ENCODE measurements at regions of chr2 and their contacts with region 1.

Region 1: DNA sequence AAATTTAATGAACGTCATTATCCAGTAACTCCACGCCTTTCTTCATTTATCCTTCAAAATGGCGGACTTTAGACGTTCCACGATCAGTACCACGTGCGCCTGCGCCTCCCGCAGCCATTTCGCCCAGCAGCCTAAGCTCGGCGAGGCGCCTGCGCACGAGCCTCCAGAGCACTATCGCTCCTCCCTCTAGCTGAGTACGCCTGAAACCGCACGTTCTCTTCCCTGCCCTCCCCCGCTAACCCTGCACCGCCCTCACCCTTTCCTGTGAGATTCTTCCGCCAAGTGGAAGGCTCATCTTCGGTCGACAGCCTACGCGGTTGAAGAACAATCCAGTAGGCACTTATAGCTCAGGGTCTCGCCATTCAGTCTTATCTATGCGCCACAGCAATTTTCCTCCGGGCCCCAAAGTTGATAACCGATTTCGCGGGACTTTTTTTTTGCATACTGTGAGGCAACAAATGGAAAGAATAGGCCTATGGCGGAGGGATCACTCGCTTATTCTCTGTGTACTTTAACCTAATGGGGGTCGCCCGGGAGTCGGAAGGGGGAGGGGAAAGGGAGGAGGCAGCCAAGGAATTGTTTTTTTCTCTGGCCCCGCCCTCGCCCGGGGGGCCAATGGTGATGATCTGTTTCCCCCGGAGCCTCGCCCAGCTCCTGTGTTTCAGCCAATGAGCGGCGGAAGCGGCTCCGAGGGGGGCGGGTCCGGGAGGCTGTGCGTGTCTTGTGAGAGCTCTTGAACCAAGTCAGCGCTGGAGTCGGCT is at the start of gene KDM3A:
- DNase-seq: peak; percentile 98 to 100 (median 99)
- ATAC-seq: peak; percentile 76
- H3K4me3 ChIP-seq: peak within 1 kb of the TSS; percentile 87
- H3K4me3 Mint-ChIP-seq: peak within 1 kb of the TSS; percentile 99
- H3K27ac ChIP-seq: peak within 1 kb of the TSS; percentile 76 to 94
- H3K27ac Mint-ChIP-seq: peak within 1 kb of the TSS; percentile 97
- H3K4me1 ChIP-seq: peaks cover 33% of the 10 kb centered on the region
- H3K4me1 Mint-ChIP-seq: peaks cover 49% of the 10 kb centered on the region
- H3K27me3 ChIP-seq: no peaks in the 10 kb centered on the region
- H3K27me3 Mint-ChIP-seq: peaks cover 7% of the 10 kb centered on the region
- CTCF ChIP-seq: no peak
- total RNA-seq, gene KDM3A: 205 to 207 TPM

Region 2: GRCh38 chr2:85772019-85772745 is 668.6 kb before region 1 on chr2:
- CTCF ChIA-PET with region 1: no interaction called
- POLR2A ChIA-PET with region 1: no interaction called
- intact Hi-C with region 1: no loop called
- DNase-seq: peak in 1 of 14 experiments; percentile 14
- ATAC-seq: no peak
- H3K4me3 ChIP-seq: no peak overlapping the region
- H3K4me3 Mint-ChIP-seq: no peak overlapping the region
- H3K27ac ChIP-seq: no peak overlapping the region
- H3K27ac Mint-ChIP-seq: no peak overlapping the region
- H3K4me1 ChIP-seq: peaks cover 3% of the 10 kb centered on the region
- H3K4me1 Mint-ChIP-seq: no peaks in the 10 kb centered on the region
- H3K27me3 ChIP-seq: peaks cover 12 to 19% of the 10 kb centered on the region in 2 experiments
- H3K27me3 Mint-ChIP-seq: peaks cover 42% of the 10 kb centered on the region
- CTCF ChIP-seq: no peak

Region 3: GRCh38 chr2:86105252-86105968 is 335.4 kb before region 1 on chr2 and contains the start of gene POLR1A:
- CTCF ChIA-PET with region 1: no interaction called
- POLR2A ChIA-PET with region 1: interaction called, 43 read pairs
- intact Hi-C with region 1: loop called in 1 of 2 experiments (anchors 10 kb)
- DNase-seq: peak; percentile 67 to 93 (median 75)
- ATAC-seq: peak; percentile 75
- H3K4me3 ChIP-seq: peak within 1 kb of the TSS; percentile 80
- H3K4me3 Mint-ChIP-seq: peak within 1 kb of the TSS; percentile 89
- H3K27ac ChIP-seq: peak within 1 kb of the TSS; percentile 81 to 87
- H3K27ac Mint-ChIP-seq: peak within 1 kb of the TSS; percentile 95
- H3K4me1 ChIP-seq: peaks cover 16% of the 10 kb centered on the region
- H3K4me1 Mint-ChIP-seq: peaks cover 60% of the 10 kb centered on the region
- H3K27me3 ChIP-seq: no peaks in the 10 kb centered on the region
- H3K27me3 Mint-ChIP-seq: no peaks in the 10 kb centered on the region
- CTCF ChIP-seq: no peak
- total RNA-seq, gene POLR1A: 13.1 to 13.4 TPM

Region 4: GRCh38 chr2:86201671-86202335 is 239.0 kb before region 1 on chr2:
- CTCF ChIA-PET with region 1: no interaction called
- POLR2A ChIA-PET with region 1: interaction called, 80 read pairs
- intact Hi-C with region 1: loop called (anchors 2 to 5 kb)
- DNase-seq: no peak
- ATAC-seq: no peak
- H3K4me3 ChIP-seq: no peak overlapping the region
- H3K4me3 Mint-ChIP-seq: peak overlapping the region; percentile 72
- H3K27ac ChIP-seq: no peak overlapping the region
- H3K27ac Mint-ChIP-seq: peak overlapping the region; percentile 4
- H3K4me1 ChIP-seq: peaks cover 12% of the 10 kb centered on the region
- H3K4me1 Mint-ChIP-seq: peaks cover 46% of the 10 kb centered on the region
- H3K27me3 ChIP-seq: no peaks in the 10 kb centered on the region
- H3K27me3 Mint-ChIP-seq: no peaks in the 10 kb centered on the region
- CTCF ChIP-seq: no peak

Region 5: GRCh38 chr2:86337244-86337836 is 103.5 kb before region 1 on chr2 and contains the start of gene REEP1:
- CTCF ChIA-PET with region 1: no interaction called
- POLR2A ChIA-PET with region 1: interaction called, 10 read pairs
- intact Hi-C with region 1: no loop called
- DNase-seq: peak in 2 of 14 experiments; percentile 5 to 26
- ATAC-seq: peak; percentile 64
- H3K4me3 ChIP-seq: peak within 1 kb of the TSS; percentile 24
- H3K4me3 Mint-ChIP-seq: peak within 1 kb of the TSS; percentile 80
- H3K27ac ChIP-seq: no peak within 1 kb of the TSS
- H3K27ac Mint-ChIP-seq: no peak within 1 kb of the TSS
- H3K4me1 ChIP-seq: peaks cover 13% of the 10 kb centered on the region
- H3K4me1 Mint-ChIP-seq: peaks cover 27% of the 10 kb centered on the region
- H3K27me3 ChIP-seq: peaks cover 37 to 59% of the 10 kb centered on the region in 2 experiments
- H3K27me3 Mint-ChIP-seq: peaks cover 75% of the 10 kb centered on the region
- CTCF ChIP-seq: no peak
- total RNA-seq, gene REEP1: not detected

Region 6: DNA sequence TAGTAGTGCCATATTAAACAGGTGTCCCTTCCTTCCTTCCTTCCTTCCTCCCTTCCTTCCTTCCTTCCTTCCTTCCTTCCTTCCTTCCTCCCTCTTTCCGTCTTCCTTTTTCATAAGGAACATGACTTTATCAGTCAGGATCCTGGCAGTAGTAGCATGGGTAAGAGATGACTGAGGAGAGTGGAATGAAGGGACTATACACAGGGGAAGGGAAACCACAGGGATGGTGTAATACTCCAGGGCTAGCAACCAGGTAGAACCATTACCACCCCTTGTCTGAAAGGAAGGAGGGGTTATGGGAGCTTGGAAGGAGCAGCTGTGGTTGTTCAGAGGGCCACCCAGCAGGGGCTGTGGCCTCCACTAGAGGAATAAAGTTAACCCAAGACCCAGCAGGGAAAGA is 22.9 kb before region 1 on chr2:
- CTCF ChIA-PET with region 1: no interaction called
- POLR2A ChIA-PET with region 1: interaction called, 14 read pairs
- intact Hi-C with region 1: no loop called
- DNase-seq: no peak
- ATAC-seq: no peak
- H3K4me3 ChIP-seq: no peak overlapping the region
- H3K4me3 Mint-ChIP-seq: no peak overlapping the region
- H3K27ac ChIP-seq: no peak overlapping the region
- H3K27ac Mint-ChIP-seq: no peak overlapping the region
- H3K4me1 ChIP-seq: no peaks in the 10 kb centered on the region
- H3K4me1 Mint-ChIP-seq: no peaks in the 10 kb centered on the region
- H3K27me3 ChIP-seq: peaks cover 4 to 7% of the 10 kb centered on the region in 2 experiments
- H3K27me3 Mint-ChIP-seq: peaks cover 29% of the 10 kb centered on the region
- CTCF ChIP-seq: no peak

Region 7: DNA sequence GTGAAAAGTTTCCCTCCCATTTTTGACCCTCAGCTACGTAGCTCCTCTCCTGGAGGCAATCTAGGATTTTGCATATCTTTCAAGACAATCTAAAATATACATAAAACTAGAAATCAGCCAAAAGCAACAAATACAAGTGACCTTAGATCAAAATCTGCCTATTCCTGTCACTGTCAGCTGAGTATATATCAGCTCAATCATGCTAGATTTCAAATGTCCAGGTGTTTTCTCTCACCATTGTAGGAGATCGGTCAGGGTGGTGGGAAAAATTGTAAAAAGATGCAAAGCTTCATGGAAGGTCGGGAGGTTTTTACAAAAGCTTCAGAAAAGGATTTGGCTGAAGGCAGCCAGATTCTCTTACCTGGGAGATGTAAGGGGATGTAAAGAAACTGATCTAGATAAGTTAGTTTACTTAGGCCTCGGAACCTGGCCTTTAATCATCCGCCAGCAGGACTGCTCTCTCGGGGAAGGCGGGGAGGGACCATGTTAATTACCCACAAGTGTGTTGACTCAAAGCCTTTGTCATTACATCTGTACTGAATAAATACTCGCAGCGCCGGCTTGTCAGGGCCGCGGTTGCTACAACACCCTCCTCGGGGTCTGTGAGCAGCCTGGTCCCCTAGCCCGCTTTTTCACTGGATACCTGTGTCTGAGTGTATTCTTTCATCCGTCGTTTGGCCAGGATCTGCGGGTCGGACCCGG is 115.5 kb after region 1 on chr2:
- CTCF ChIA-PET with region 1: no interaction called
- POLR2A ChIA-PET with region 1: interaction called, 19 read pairs
- intact Hi-C with region 1: loop called (anchors 5 kb)
- DNase-seq: no peak
- ATAC-seq: no peak
- H3K4me3 ChIP-seq: no peak overlapping the region
- H3K4me3 Mint-ChIP-seq: no peak overlapping the region
- H3K27ac ChIP-seq: no peak overlapping the region
- H3K27ac Mint-ChIP-seq: no peak overlapping the region
- H3K4me1 ChIP-seq: peaks cover 35% of the 10 kb centered on the region
- H3K4me1 Mint-ChIP-seq: peaks cover 55% of the 10 kb centered on the region
- H3K27me3 ChIP-seq: no peaks in the 10 kb centered on the region
- H3K27me3 Mint-ChIP-seq: no peaks in the 10 kb centered on the region
- CTCF ChIP-seq: no peak

Region 8: DNA sequence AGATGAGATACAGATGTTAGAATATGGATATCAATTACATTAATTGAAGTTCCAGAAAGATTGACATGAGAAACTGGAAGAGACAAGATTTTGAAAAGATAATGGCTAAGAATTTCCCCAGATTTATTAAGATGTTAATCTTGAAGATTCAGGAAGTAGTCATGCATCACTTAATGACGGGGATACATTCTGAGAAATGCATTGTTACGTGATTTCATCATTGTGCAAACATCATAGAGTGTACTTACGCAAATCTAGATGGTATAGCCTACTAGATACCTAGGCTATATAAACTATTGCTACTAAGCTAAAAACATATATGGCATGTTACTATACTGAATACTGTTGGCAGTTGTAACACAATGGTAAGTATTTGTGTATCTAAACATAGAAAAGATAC is 129.2 kb after region 1 on chr2:
- CTCF ChIA-PET with region 1: no interaction called
- POLR2A ChIA-PET with region 1: no interaction called
- intact Hi-C with region 1: no loop called
- DNase-seq: no peak
- ATAC-seq: no peak
- H3K4me3 ChIP-seq: no peak overlapping the region
- H3K4me3 Mint-ChIP-seq: no peak overlapping the region
- H3K27ac ChIP-seq: no peak overlapping the region
- H3K27ac Mint-ChIP-seq: no peak overlapping the region
- H3K4me1 ChIP-seq: no peaks in the 10 kb centered on the region
- H3K4me1 Mint-ChIP-seq: no peaks in the 10 kb centered on the region
- H3K27me3 ChIP-seq: no peaks in the 10 kb centered on the region
- H3K27me3 Mint-ChIP-seq: peaks cover 3% of the 10 kb centered on the region
- CTCF ChIP-seq: no peak

Region 9: DNA sequence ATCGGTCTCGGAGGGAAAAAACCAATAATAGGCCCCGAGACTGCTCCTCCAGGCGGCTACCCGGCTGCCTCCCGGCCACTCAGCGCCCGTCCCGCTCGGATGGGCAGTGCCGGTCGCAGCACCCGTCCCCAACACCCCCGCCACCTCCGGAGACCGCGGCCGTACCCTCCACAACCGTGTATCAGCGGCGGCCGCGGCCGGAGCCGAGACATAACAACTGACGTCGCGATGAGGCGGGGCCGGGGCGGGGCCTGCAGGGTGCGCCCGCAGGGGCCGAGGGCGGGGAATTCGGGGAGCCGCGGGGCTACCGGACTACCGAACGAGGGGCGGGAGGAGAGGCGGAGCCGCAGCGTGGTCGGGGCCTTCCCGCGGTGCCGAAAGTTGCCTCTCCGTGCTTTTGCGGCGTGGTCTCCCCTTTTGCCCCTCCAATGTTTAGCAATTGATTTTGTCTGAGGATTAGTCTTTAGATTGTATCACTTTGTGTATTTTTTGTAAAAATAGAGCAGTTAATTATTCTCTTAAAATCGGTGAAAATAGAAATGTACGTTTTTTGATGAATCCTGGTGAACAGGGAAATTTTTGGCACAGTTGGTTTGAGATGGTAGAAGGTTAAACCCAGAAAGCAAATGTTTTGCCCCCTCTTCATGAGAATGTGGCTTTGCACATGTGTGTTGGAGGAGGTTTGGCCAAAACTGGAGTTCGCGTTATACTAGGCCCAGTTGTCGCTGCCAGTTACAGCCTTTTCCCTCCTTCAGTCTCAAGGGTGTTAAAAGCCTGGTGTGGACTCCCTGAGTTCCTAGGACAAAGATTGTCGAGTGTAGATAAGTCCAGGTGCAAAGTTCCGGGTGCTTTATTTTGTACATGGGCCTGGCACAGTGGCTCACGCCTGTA is 183.1 kb after region 1 on chr2 and contains the start of gene RNF103:
- CTCF ChIA-PET with region 1: no interaction called
- POLR2A ChIA-PET with region 1: interaction called, 60 read pairs
- intact Hi-C with region 1: loop called in 1 of 2 experiments (anchors 2 kb)
- DNase-seq: peak; percentile 85 to 96 (median 94)
- ATAC-seq: peak; percentile 88
- H3K4me3 ChIP-seq: peak within 1 kb of the TSS; percentile 61
- H3K4me3 Mint-ChIP-seq: peak within 1 kb of the TSS; percentile 94
- H3K27ac ChIP-seq: peak within 1 kb of the TSS; percentile 91 to 93
- H3K27ac Mint-ChIP-seq: peak within 1 kb of the TSS; percentile 92
- H3K4me1 ChIP-seq: peaks cover 10% of the 10 kb centered on the region
- H3K4me1 Mint-ChIP-seq: peaks cover 40% of the 10 kb centered on the region
- H3K27me3 ChIP-seq: no peaks in the 10 kb centered on the region
- H3K27me3 Mint-ChIP-seq: peaks cover 3% of the 10 kb centered on the region
- CTCF ChIP-seq: no peak
- total RNA-seq, gene RNF103: 124 to 130 TPM